Common myeloid progenitor, CD34-positive (primary cell): ENCODE measurements at regions of chr12 and their contacts with region 1.

Region 1: GRCh38 chr12:48851883-48852733 is at the start of gene DDX23:
- DNase-seq: peak; percentile 96 to 98 (median 97)
- H3K4me3 ChIP-seq: peak within 1 kb of the TSS; percentile 70 to 99 (median 95)
- H3K27ac ChIP-seq: peak within 1 kb of the TSS; percentile 88 to 93
- H3K4me1 ChIP-seq: peaks cover 8 to 24% (median 21%) of the 10 kb centered on the region in 4 experiments
- H3K27me3 ChIP-seq: no peaks in the 10 kb centered on the region

Region 2: DNA sequence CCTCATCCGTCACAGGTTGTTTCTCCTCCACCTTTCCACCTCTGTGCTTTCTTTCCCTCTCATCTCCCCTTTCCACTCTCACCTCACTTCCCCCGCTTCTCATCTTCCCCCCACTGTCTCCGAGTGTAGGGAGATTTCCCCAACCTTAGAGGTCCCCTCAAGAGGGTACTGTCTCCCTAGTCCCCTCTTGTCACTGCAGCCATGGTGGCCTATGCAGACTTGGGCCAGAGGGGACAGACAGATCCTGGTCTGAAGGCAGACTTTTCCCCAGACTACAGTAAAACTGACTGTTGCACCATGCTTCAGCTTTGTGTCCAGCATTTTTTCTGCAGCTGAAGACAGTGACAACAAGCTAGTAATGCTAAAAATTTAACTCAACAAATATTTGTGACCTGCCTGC is 211.3 kb before region 1 on chr12:
- CTCF ChIA-PET with region 1: no interaction called
- POLR2A ChIA-PET with region 1: no interaction called
- DNase-seq: no peak
- H3K4me3 ChIP-seq: no peak overlapping the region
- H3K27ac ChIP-seq: no peak overlapping the region
- H3K4me1 ChIP-seq: no peaks in the 10 kb centered on the region
- H3K27me3 ChIP-seq: no peaks in the 10 kb centered on the region

Region 3: DNA sequence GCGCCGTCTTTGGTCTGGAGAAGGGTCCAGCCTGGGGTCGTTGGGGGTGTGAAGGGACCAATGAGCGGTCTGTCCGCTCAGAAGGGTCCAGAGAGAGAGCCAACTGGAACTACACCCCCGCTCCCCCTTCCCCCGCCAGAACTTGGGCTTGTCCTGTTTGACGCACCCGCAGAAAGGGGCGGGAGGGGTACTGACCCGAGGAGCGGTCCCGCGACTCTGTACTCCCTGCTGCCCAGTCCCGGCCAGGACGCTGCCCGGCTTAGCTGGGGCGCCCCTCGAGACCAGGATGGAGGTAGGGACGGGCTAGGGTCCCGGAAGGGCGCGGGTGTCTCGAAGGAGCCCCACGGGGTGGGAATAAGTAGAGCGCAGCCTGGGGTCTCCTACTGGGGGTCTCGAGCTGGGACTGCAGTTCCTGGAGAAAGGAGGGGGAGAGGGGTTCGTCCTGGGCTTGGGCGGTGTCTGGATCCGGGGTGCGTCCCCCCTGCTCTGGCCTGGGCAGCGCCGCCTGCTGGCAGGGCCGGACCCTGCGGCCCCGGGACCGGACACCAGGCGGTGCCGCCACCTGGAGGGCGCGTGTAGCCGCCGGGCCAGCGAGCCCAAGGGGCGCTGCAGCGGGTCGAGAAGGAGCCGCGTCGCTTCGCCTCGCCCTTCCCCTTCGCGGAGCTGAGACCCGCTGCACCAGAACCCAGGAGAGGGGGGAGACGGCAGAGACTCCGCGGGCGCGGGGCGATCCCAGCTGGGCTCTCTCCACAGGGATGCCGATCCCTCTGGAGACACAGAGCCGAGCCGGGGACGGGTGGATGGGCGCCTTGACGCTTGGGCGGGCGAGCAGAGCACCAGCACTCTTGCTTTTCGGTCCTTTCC is 37.6 kb before region 1 on chr12:
- CTCF ChIA-PET with region 1: interaction called, 20 read pairs
- POLR2A ChIA-PET with region 1: no interaction called
- DNase-seq: peak; percentile 80 to 85 (median 82)
- H3K4me3 ChIP-seq: peak overlapping the region; percentile 72 to 88 (median 79)
- H3K27ac ChIP-seq: peak overlapping the region in 1 of 2 experiments; percentile 58
- H3K4me1 ChIP-seq: peaks cover 0 to 44% (median 36%) of the 10 kb centered on the region in 4 experiments
- H3K27me3 ChIP-seq: peaks cover 0 to 9% (median 0%) of the 10 kb centered on the region in 5 experiments

Region 4: DNA sequence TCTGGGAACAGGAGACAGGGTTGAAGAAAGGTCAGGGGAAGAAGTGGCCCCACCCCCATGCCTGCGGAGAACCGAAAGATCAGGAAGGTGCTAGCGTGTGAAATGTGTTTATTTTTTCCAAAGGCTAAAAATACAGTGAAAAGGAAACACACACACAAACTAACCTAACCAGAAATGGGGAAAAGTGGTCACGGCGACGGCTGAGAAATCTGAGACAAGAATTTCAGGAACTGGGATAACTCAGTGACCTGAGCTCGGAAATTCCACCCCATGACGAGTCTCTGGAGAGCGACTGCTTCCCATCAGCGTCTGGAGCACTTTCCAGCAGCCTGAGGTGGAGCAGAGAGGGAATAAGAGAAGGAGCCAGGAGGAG is 30.2 kb after region 1 on chr12:
- CTCF ChIA-PET with region 1: interaction called, 16 read pairs
- POLR2A ChIA-PET with region 1: no interaction called
- DNase-seq: no peak
- H3K4me3 ChIP-seq: peak overlapping the region in 2 of 7 experiments; percentile 19 to 21
- H3K27ac ChIP-seq: no peak overlapping the region
- H3K4me1 ChIP-seq: peaks cover 0 to 12% (median 6%) of the 10 kb centered on the region in 4 experiments
- H3K27me3 ChIP-seq: peaks cover 0 to 23% (median 9%) of the 10 kb centered on the region in 5 experiments

Region 5: DNA sequence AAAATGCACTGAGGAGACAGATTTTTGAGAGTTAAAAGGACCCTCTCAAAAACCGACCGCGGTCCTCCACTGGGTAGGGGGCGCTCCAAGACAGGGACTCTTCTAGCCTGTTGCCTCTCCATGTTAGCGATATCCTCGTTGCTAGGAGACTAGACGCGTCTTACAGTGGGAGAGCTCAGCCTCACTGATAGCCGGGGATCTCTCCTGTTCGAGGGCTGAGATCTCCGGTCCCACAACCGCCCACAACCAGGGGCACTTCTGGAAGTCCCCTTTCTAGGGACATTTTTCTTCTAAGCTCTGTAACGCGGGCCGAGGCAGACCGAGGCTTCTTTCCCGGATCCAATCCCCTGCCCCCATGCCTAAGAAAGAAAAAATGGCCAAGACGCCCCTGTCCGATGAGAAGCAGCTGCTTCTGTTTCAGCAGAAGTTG is 51.9 kb after region 1 on chr12:
- CTCF ChIA-PET with region 1: interaction called, 28 read pairs
- POLR2A ChIA-PET with region 1: no interaction called
- DNase-seq: peak; percentile 90 to 94 (median 93)
- H3K4me3 ChIP-seq: peak overlapping the region in 6 of 7 experiments; percentile 48 to 77 (median 66)
- H3K27ac ChIP-seq: peak overlapping the region in 1 of 2 experiments; percentile 69
- H3K4me1 ChIP-seq: peaks cover 0 to 13% (median 12%) of the 10 kb centered on the region in 4 experiments
- H3K27me3 ChIP-seq: peaks cover 0 to 2% (median 0%) of the 10 kb centered on the region in 5 experiments

Region 6: GRCh38 chr12:48936379-48936979 is 84.4 kb after region 1 on chr12:
- CTCF ChIA-PET with region 1: interaction called, 15 read pairs
- POLR2A ChIA-PET with region 1: no interaction called
- DNase-seq: peak; percentile 69 to 85 (median 75)
- H3K4me3 ChIP-seq: no peak overlapping the region
- H3K27ac ChIP-seq: no peak overlapping the region
- H3K4me1 ChIP-seq: peaks cover 0 to 22% (median 17%) of the 10 kb centered on the region in 4 experiments
- H3K27me3 ChIP-seq: no peaks in the 10 kb centered on the region

Region 7: GRCh38 chr12:48988030-48988649 is 136.0 kb after region 1 on chr12:
- CTCF ChIA-PET with region 1: interaction called, 17 read pairs
- POLR2A ChIA-PET with region 1: no interaction called
- DNase-seq: peak; percentile 47 to 69 (median 60)
- H3K4me3 ChIP-seq: no peak overlapping the region
- H3K27ac ChIP-seq: no peak overlapping the region
- H3K4me1 ChIP-seq: no peaks in the 10 kb centered on the region
- H3K27me3 ChIP-seq: peaks cover 5 to 73% (median 38%) of the 10 kb centered on the region in 5 experiments

Region 8: DNA sequence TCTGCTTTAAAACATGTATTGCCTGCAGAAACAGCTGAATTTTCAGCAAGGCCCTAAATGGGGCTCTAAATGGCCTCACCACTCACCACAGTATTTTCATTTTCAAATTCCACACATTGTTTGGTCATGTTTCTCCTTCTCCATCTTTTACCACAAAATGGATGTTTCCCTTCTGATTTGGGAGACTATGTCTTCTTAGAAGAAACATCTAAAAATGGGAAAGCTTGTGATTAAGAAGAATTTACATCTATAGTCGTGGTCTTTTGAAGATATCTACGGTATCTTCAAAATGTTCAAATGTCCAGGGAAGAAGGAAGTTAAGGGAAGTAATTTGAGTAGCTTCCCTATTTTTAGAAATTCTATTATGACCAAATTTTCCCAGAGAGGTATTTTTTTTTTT is 392.1 kb after region 1 on chr12:
- CTCF ChIA-PET with region 1: no interaction called
- POLR2A ChIA-PET with region 1: no interaction called
- DNase-seq: no peak
- H3K4me3 ChIP-seq: no peak overlapping the region
- H3K27ac ChIP-seq: no peak overlapping the region
- H3K4me1 ChIP-seq: peaks cover 0 to 29% (median 3%) of the 10 kb centered on the region in 4 experiments
- H3K27me3 ChIP-seq: no peaks in the 10 kb centered on the region